ENCODE measurements at regions of chr3 and their contacts with region 1.

Region 1: DNA sequence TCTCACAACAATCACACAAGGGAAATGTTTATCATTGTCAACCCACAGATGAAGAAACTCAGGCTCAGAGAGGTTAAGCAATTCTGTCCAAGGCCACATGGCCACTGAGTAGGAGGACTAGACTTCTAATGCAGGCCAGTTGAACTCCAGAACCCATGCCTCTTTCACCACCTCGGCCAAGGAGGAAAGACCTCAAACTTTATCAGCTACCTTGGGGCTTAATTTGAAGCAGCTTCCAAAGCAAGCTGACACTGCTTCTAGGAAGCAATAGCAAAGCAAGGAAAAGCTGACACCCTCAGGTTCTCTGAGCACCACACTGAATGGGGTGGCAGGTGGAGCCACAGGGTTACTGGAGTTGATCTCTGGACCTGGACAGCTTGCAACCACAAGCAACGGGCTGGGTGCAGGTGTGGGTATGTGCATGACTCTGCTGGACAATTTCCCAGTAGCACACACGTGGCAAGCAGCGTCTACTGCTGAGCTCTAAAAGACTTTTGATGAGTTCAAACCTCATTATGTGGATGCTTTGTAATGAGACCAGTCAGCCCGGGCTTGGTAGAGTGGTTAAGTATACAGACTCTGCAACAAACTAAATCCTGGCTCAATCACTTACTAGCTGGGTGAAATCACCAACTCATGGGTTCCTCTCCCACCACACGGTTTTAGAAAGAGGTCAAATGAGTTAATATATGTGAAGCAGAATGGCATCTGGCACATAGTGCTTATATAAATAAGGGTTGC is 23.1 kb downstream of the CCNL1 start:
- DNase-seq: no peak
- H3K4me3 ChIP-seq: no peak overlapping the region
- H3K27ac ChIP-seq: no peak overlapping the region
- H3K4me1 ChIP-seq: peaks cover 6% of the 10 kb centered on the region
- H3K27me3 ChIP-seq: no peaks in the 10 kb centered on the region
- CTCF ChIP-seq: no peak
- POLR2A ChIP-seq: no peak

Region 2: GRCh38 chr3:155995525-155996351 is 1141.1 kb before region 1 on chr3:
- CTCF ChIA-PET with region 1: interaction called, 4 read pairs
- POLR2A ChIA-PET with region 1: no interaction called
- dilution Hi-C with region 1: no loop called
- intact Hi-C with region 1: loop called (anchors 5 kb)
- DNase-seq: peak; percentile 43
- H3K4me3 ChIP-seq: no peak overlapping the region
- H3K27ac ChIP-seq: no peak overlapping the region
- H3K4me1 ChIP-seq: no peaks in the 10 kb centered on the region
- H3K27me3 ChIP-seq: peaks cover 0 to 2% of the 10 kb centered on the region in 2 experiments
- CTCF ChIP-seq: peak; percentile 34 to 38
- POLR2A ChIP-seq: no peak

Region 3: DNA sequence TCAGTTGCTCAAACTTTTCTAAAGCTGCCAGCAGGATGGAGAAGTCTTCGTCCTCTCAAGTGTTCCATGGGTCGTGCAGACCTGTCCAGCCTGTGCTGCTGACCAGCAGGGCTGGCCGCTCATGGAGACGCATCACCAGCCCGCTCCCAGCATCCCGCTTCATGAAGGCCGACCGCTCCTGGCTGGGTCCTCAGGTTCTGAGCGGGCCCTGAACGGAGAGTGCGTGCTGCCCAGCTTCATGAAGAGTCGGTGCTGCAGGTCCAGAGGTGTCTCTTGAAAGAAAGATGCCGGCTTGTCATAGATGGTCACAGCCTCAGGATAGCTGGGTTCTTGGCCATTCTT is 1092.2 kb before region 1 on chr3:
- CTCF ChIA-PET with region 1: interaction called, 22 read pairs
- POLR2A ChIA-PET with region 1: no interaction called
- dilution Hi-C with region 1: no loop called
- intact Hi-C with region 1: loop called (anchors 1 kb)
- DNase-seq: no peak
- H3K4me3 ChIP-seq: no peak overlapping the region
- H3K27ac ChIP-seq: no peak overlapping the region
- H3K4me1 ChIP-seq: no peaks in the 10 kb centered on the region
- H3K27me3 ChIP-seq: no peaks in the 10 kb centered on the region
- CTCF ChIP-seq: no peak
- POLR2A ChIP-seq: no peak

Region 4: GRCh38 chr3:156535162-156535627 is 601.6 kb before region 1 on chr3:
- CTCF ChIA-PET with region 1: interaction called, 19 read pairs
- POLR2A ChIA-PET with region 1: no interaction called
- dilution Hi-C with region 1: no loop called
- intact Hi-C with region 1: loop called (anchors 2 kb)
- DNase-seq: peak; percentile 94
- H3K4me3 ChIP-seq: no peak overlapping the region
- H3K27ac ChIP-seq: peak overlapping the region; percentile 55
- H3K4me1 ChIP-seq: peaks cover 7% of the 10 kb centered on the region
- H3K27me3 ChIP-seq: no peaks in the 10 kb centered on the region
- CTCF ChIP-seq: peak in 1 of 2 donors; percentile 22
- POLR2A ChIP-seq: peak; percentile 58

Region 5: GRCh38 chr3:156547637-156548036 is 589.2 kb before region 1 on chr3:
- CTCF ChIA-PET with region 1: interaction called, 11 read pairs
- POLR2A ChIA-PET with region 1: no interaction called
- dilution Hi-C with region 1: no loop called
- intact Hi-C with region 1: no loop called
- DNase-seq: peak; percentile 51
- H3K4me3 ChIP-seq: no peak overlapping the region
- H3K27ac ChIP-seq: peak overlapping the region; percentile 42
- H3K4me1 ChIP-seq: peaks cover 93% of the 10 kb centered on the region
- H3K27me3 ChIP-seq: no peaks in the 10 kb centered on the region
- CTCF ChIP-seq: no peak
- POLR2A ChIP-seq: no peak

Measured in endothelial cell of umbilical vein (primary cell).